ENCODE measurements at regions of chrX and their contacts with region 1.

Region 1: GRCh38 chrX:38803586-38804431 is 2.5 kb downstream of the MID1IP1 start:
- DNase-seq: peak; percentile 86 to 91 (median 90)
- ATAC-seq: peak; percentile 84 to 92 (median 86)
- H3K4me3 ChIP-seq: peak overlapping the region; percentile 44 to 90 (median 70)
- H3K27ac ChIP-seq: peak overlapping the region; percentile 86 to 98 (median 93)
- H3K4me1 ChIP-seq: peaks cover 0 to 37% (median 12%) of the 10 kb centered on the region in 12 donors
- H3K27me3 ChIP-seq: no peaks in the 10 kb centered on the region
- CTCF ChIP-seq: no peak
- POLR2A ChIP-seq: peak in 1 of 2 donors; percentile 90

Region 2: DNA sequence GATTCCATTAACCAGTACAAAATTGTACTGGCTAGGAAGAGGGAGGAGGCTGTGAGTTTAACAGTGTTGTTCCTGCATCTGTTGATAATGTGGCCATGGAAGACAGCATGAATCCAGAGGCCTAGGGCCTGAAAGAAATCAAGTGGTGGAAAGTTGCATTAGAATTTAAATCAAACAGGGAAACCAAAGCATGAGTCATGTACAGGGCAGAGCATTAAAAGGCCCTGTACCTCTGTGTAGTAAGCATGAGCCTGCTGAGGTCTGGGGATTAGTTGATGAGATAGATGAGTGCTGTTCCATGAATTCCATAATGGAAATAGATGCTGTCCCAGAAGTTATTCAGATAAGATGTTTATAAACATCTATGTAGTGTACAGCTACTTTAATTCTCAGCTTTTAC is 55.8 kb after region 1 on chrX:
- intact Hi-C with region 1: loop called in 2 of 10 experiments (anchors 5 to 10 kb)
- DNase-seq: no peak
- ATAC-seq: no peak
- H3K4me3 ChIP-seq: no peak overlapping the region
- H3K27ac ChIP-seq: no peak overlapping the region
- H3K4me1 ChIP-seq: peaks cover 0 to 10% (median 0%) of the 10 kb centered on the region in 12 donors
- H3K27me3 ChIP-seq: peaks cover 0 to 6% (median 0%) of the 10 kb centered on the region in 9 donors
- CTCF ChIP-seq: no peak
- POLR2A ChIP-seq: no peak

Region 3: DNA sequence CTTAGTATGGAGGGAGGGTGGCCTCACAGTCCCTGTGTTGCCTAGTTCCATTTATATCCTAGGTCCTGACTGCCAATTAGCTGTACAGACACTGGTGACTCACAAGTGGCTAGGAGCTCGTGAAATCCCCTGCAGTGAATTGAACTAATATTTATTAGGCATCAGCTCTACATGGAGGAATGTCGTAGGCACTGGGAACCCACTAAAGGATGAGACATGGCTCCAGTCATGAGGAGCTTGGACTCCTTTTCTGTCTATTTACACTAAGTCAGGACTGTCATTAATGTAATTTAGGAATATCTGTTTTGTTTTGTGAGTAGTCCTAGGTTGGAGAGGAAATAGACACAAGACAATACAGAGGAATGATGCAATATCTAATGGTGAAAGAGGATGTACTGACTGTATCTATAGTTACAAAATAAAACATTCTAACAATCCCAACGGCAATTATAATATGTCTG is 65.2 kb after region 1 on chrX:
- intact Hi-C with region 1: loop called in 2 of 10 experiments (anchors 5 to 10 kb)
- DNase-seq: peak in 2 of 5 donors; percentile 10 to 28
- ATAC-seq: peak; percentile 75 to 90 (median 86)
- H3K4me3 ChIP-seq: no peak overlapping the region
- H3K27ac ChIP-seq: peak overlapping the region in 7 of 12 donors; percentile 15 to 55 (median 41)
- H3K4me1 ChIP-seq: peaks cover 0 to 20% (median 6%) of the 10 kb centered on the region in 12 donors
- H3K27me3 ChIP-seq: peaks cover 0 to 9% (median 0%) of the 10 kb centered on the region in 9 donors
- CTCF ChIP-seq: no peak
- POLR2A ChIP-seq: no peak

Region 4: GRCh38 chrX:38973317-38973716 is 169.5 kb after region 1 on chrX:
- intact Hi-C with region 1: loop called in 1 of 10 experiments (anchors 5 kb)
- DNase-seq: no peak
- ATAC-seq: peak in 2 of 4 donors; percentile 20 to 39
- H3K4me3 ChIP-seq: no peak overlapping the region
- H3K27ac ChIP-seq: no peak overlapping the region
- H3K4me1 ChIP-seq: peaks cover 0 to 7% (median 0%) of the 10 kb centered on the region in 12 donors
- H3K27me3 ChIP-seq: peaks cover 0 to 10% (median 0%) of the 10 kb centered on the region in 9 donors
- CTCF ChIP-seq: no peak
- POLR2A ChIP-seq: no peak

Region 5: DNA sequence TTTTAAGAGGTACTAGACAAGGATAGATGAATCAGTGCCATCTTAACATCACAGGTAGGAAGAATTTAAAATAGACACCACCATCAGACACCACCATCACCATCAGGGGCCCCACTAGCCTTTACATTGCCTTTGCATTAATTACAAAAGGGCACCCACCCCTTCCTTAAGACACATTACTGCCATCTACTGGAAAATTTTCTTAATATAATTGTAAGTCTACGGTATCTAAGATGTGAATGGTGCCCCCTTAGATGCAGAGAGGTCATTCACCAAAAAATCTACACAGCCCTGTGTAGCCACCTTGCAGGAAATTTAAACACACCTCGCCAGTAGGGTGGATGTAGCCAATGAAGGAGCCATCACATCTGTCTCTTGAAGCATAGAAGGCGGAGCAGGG is 181.6 kb after region 1 on chrX:
- intact Hi-C with region 1: loop called in 9 of 10 experiments (anchors 5 to 10 kb)
- DNase-seq: no peak
- ATAC-seq: no peak
- H3K4me3 ChIP-seq: no peak overlapping the region
- H3K27ac ChIP-seq: no peak overlapping the region
- H3K4me1 ChIP-seq: no peaks in the 10 kb centered on the region
- H3K27me3 ChIP-seq: no peaks in the 10 kb centered on the region
- CTCF ChIP-seq: peak in 8 of 12 donors; percentile 23 to 42 (median 28)
- POLR2A ChIP-seq: no peak

Region 6: DNA sequence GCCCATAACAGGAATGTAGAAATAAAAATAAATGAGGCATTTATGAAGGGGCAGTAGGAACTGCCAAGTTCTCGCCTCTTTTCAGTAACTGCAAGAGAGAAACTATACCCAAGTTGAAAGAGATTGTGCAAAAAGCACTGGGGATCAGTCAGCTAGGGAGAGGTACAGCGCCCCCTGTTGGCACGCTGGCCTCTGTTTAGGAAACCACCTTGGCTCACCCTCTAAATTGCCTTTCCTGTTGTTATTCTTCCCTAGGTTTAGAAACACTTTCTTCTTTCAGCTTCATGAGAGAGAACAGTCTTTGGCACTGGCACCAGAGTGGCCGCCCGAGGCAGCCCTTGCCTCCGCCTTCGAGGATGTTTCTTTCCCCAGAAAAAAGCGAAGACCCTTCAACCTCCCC is 346.0 kb after region 1 on chrX:
- intact Hi-C with region 1: loop called in 3 of 10 experiments (anchors 5 to 10 kb)
- DNase-seq: peak; percentile 47 to 83 (median 62)
- ATAC-seq: peak in 3 of 4 donors; percentile 63 to 69 (median 68)
- H3K4me3 ChIP-seq: no peak overlapping the region
- H3K27ac ChIP-seq: no peak overlapping the region
- H3K4me1 ChIP-seq: peaks cover 0 to 7% (median 0%) of the 10 kb centered on the region in 12 donors
- H3K27me3 ChIP-seq: peaks cover 0 to 25% (median 0%) of the 10 kb centered on the region in 9 donors
- CTCF ChIP-seq: peak; percentile 54 to 80 (median 62)
- POLR2A ChIP-seq: no peak

Measured in heart left ventricle (tissue), 16 donors.